Psoas muscle (tissue), 8 donors: ENCODE measurements at regions of chr12 and their contacts with region 1.

Region 1: GRCh38 chr12:7995266-7995963 is 37.1 kb upstream of the FOXJ2 start:
- DNase-seq: peak; percentile 75 to 82
- ATAC-seq: peak; percentile 92 to 97 (median 94)
- H3K4me3 ChIP-seq: no peak overlapping the region
- H3K27ac ChIP-seq: peak overlapping the region; percentile 16
- H3K4me1 ChIP-seq: no peaks in the 10 kb centered on the region
- H3K27me3 ChIP-seq: peaks cover 0 to 2% (median 0%) of the 10 kb centered on the region in 3 donors
- CTCF ChIP-seq: peak; percentile 84

Region 2: GRCh38 chr12:7859552-7859951 is 135.9 kb before region 1 on chr12:
- intact Hi-C with region 1: loop called (anchors 1 to 5 kb)
- DNase-seq: no peak
- ATAC-seq: no peak
- H3K4me3 ChIP-seq: no peak overlapping the region
- H3K27ac ChIP-seq: no peak overlapping the region
- H3K4me1 ChIP-seq: no peaks in the 10 kb centered on the region
- H3K27me3 ChIP-seq: no peaks in the 10 kb centered on the region
- CTCF ChIP-seq: no peak

Region 3: DNA sequence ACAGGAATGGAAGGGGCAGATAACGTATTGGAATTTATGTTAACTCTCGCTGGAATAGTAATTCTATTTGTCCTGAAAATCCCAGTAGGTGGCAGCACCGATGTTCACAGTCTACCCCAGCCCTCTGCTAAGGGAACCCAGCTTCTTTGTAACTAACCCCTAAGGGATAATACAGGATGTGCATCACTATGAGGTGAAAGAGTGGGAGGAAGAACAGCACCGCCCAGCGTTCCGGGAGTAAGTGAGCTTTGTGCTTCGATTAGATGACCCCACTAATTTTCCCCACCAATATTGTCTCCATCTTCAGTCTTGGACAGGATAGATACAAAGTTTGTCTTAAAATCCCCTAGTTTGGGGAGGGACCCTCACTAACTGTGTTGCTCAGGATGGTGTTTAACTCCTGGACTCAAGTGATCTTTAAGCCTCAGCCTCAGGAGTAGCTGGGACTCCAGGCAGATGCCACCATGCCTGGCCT is 62.1 kb before region 1 on chr12:
- intact Hi-C with region 1: loop called in 1 of 2 experiments (anchors 5 kb)
- DNase-seq: peak; percentile 66 to 80
- ATAC-seq: peak; percentile 57 to 88 (median 86)
- H3K4me3 ChIP-seq: peak overlapping the region; percentile 66
- H3K27ac ChIP-seq: peak overlapping the region; percentile 39
- H3K4me1 ChIP-seq: peaks cover 10% of the 10 kb centered on the region
- H3K27me3 ChIP-seq: no peaks in the 10 kb centered on the region
- CTCF ChIP-seq: peak; percentile 47

Region 4: GRCh38 chr12:8032242-8033152 is 37.1 kb after region 1 on chr12 and contains the start of gene FOXJ2:
- intact Hi-C with region 1: loop called in 1 of 2 experiments (anchors 1 kb)
- DNase-seq: peak; percentile 84 to 90
- ATAC-seq: peak; percentile 81 to 86 (median 84)
- H3K4me3 ChIP-seq: peak within 1 kb of the TSS; percentile 97
- H3K27ac ChIP-seq: peak within 1 kb of the TSS; percentile 99
- H3K4me1 ChIP-seq: peaks cover 37% of the 10 kb centered on the region
- H3K27me3 ChIP-seq: no peaks in the 10 kb centered on the region
- CTCF ChIP-seq: no peak
- total RNA-seq, gene FOXJ2: 24.5 to 51.3 (median 37.7) TPM